Activated T-helper 2 cell treated with anti-CD3 and anti-CD28 coated beads, Interferon-gamma antibody, Interleukin-2, Interleukin-4, amounts not matched to agents 10 μg/mL and 5 μg/mL and 100 μg/mL, durations not matched to agents 14 hours and 24 hours and 36 hours (primary cell): ENCODE measurements at regions of chr4 and their contacts with region 1.

Region 1: GRCh38 chr4:6986781-6987587 is 56.2 kb upstream of the TADA2B start:
- DNase-seq: peak; percentile 91
- H3K4me3 Mint-ChIP-seq: peak overlapping the region; percentile 98
- H3K27ac Mint-ChIP-seq: peak overlapping the region; percentile 92
- H3K4me1 Mint-ChIP-seq: peaks cover 58% of the 10 kb centered on the region
- H3K27me3 Mint-ChIP-seq: no peaks in the 10 kb centered on the region

Region 2: GRCh38 chr4:6709230-6710114 is 277.5 kb before region 1 on chr4 and contains the start of gene MRFAP1L1:
- intact Hi-C with region 1: loop called (anchors 5 kb)
- DNase-seq: peak; percentile 94
- H3K4me3 Mint-ChIP-seq: peak within 1 kb of the TSS; percentile 94
- H3K27ac Mint-ChIP-seq: peak within 1 kb of the TSS; percentile 95
- H3K4me1 Mint-ChIP-seq: peaks cover 51% of the 10 kb centered on the region
- H3K27me3 Mint-ChIP-seq: peaks cover 2% of the 10 kb centered on the region
- total RNA-seq, gene MRFAP1L1: 46.6 and 49.6 TPM in 2 replicates

Region 3: DNA sequence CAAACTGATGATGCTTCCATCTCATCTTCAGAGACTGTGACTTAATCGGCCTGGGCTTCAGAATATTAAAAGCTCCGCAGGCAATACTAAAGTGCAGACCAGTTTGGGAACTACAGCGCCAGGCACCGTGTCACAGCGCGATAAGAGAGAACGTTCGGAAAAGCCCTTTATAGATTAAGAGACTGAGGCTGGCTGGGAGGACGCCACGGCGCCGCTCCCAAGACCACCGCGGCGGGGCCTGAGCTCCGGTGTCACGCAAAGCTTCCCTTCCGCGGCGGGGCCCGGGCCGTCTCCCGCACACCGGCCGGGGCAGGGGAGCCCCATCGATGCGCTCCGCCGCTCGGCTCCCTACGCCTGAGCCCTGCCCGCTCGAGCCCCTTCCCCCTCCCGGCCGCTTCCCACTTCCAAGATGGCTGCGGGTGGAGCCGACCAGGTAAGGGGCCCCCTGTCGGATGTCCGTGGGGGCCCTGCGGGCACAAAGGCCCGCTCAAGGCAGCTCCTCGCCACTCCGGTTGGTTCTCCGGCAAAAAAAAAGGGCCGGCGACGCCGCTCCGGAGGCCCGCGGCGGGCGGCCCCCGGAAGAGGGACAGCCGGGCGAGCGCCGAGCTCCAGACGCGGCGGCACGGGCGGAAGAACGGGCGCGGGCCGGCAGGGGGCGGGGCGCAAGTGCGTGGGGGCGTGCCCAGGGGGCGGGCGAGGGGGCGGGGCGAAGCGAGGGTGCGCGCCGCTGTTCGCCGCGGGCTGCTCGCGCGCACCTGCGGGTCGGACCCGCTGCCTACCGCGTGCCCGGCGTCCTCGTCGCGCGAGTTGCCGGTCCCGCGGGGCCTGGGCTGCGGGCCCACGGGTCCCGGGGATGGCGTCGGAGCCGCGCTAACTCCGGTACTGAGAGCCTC is 77.7 kb before region 1 on chr4 and contains the start of gene TBC1D14:
- intact Hi-C with region 1: loop called (anchors 1 kb)
- DNase-seq: peak; percentile 82
- H3K4me3 Mint-ChIP-seq: peak within 1 kb of the TSS; percentile 88
- H3K27ac Mint-ChIP-seq: peak within 1 kb of the TSS; percentile 87
- H3K4me1 Mint-ChIP-seq: peaks cover 31% of the 10 kb centered on the region
- H3K27me3 Mint-ChIP-seq: peaks cover 6% of the 10 kb centered on the region
- total RNA-seq, gene TBC1D14: 34.9 and 35.1 TPM in 2 replicates

Region 4: DNA sequence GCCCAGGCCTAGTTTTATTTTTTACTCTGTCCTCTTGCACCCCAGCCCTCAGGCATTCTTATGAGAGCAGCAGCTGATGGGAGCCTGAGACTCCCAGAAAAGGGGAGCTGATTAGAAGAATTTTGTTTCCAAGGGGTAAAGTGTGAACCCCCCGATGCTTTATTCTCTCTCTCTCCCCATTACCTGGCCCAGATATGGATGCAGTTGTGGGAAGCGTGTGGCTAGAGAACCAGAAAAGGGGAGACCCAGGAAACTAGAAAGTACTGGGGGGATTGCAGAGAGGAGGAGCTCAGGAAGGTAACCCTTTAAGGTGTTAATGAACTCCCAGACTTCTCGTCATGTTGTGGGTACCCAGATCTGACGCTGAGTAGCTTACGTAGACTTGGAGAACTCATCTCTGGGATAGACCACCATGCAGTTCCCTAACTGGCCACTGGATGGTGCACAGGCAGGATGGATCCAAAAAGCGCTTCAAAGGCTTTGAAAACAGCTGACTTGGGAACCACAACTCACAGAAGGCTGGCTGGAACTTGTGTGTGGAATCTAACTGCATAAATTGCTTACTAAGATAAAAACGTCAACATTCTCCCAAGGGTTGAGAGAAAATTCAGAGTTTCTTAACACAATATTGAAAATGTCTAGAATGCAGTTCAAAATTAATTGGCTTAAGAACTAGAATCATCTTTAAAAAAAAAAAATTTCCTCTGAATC is 12.7 kb before region 1 on chr4:
- intact Hi-C with region 1: loop called (anchors 1 kb)
- DNase-seq: peak; percentile 67
- H3K4me3 Mint-ChIP-seq: no peak overlapping the region
- H3K27ac Mint-ChIP-seq: no peak overlapping the region
- H3K4me1 Mint-ChIP-seq: peaks cover 7% of the 10 kb centered on the region
- H3K27me3 Mint-ChIP-seq: no peaks in the 10 kb centered on the region

Region 5: GRCh38 chr4:7052923-7053715 is 66.1 kb after region 1 on chr4:
- intact Hi-C with region 1: no loop called
- DNase-seq: no peak
- H3K4me3 Mint-ChIP-seq: no peak overlapping the region
- H3K27ac Mint-ChIP-seq: peak overlapping the region; percentile 38
- H3K4me1 Mint-ChIP-seq: peaks cover 7% of the 10 kb centered on the region
- H3K27me3 Mint-ChIP-seq: no peaks in the 10 kb centered on the region

Region 6: GRCh38 chr4:7067452-7068278 is 80.7 kb after region 1 on chr4 and contains the start of gene GRPEL1:
- intact Hi-C with region 1: loop called (anchors 1 kb)
- DNase-seq: peak; percentile 99
- H3K4me3 Mint-ChIP-seq: peak within 1 kb of the TSS; percentile 89
- H3K27ac Mint-ChIP-seq: peak within 1 kb of the TSS; percentile 93
- H3K4me1 Mint-ChIP-seq: peaks cover 34% of the 10 kb centered on the region
- H3K27me3 Mint-ChIP-seq: peaks cover 12% of the 10 kb centered on the region
- total RNA-seq, gene GRPEL1: 84.4 and 84.6 TPM in 2 replicates